SK-N-SH (cell line): ENCODE measurements at regions of chr10 and their contacts with region 1.

Region 1: DNA sequence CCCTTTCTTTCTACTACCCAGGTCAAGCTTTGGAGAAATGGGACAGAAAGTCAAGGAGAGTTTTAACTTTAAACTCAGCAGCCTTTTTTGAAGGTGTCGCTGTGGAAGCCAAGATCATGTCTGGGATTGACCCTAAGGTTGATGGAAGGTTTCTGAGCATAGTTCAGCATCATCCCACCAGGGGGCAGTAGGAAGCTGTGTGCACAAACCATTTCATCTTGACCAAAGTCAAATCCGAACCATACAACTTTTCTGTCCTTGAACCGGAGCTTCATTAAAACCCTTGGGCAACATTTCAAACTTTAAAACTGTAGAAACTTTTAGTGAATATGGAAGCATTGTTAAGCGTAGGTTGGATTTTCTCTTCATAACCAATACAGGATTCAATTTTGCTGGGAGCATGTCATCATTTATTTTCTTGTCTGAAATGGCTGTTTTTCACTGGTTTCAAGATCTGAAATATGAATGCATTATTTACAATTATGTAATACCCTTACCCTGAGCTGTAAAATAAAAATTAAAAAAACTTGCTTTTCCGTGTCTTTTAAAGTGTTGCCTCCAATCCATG is 214.4 kb upstream of the KIAA1217 start:
- DNase-seq: peak; percentile 52
- H3K4me3 ChIP-seq: no peak overlapping the region; a peak in 1 of 4 replicates
- H3K27ac ChIP-seq: peak overlapping the region in 1 of 2 experiments; percentile 62; a peak in 1 of 4 replicates
- H3K4me1 ChIP-seq: peaks cover 0 to 3% of the 10 kb centered on the region in 2 experiments; a peak in 2 of 4 replicates
- H3K27me3 ChIP-seq: no peaks in the 10 kb centered on the region
- CTCF ChIP-seq: peak; percentile 90
- EP300 ChIP-seq: no peak
- RAD21 ChIP-seq: peak; percentile 92

Region 2: GRCh38 chr10:23886355-23886754 is 108.2 kb before region 1 on chr10:
- CTCF ChIA-PET with region 1: no interaction called
- POLR2A ChIA-PET with region 1: no interaction called
- DNase-seq: no peak
- H3K4me3 ChIP-seq: no peak overlapping the region
- H3K27ac ChIP-seq: no peak overlapping the region
- H3K4me1 ChIP-seq: no peaks in the 10 kb centered on the region; a peak in 1 of 4 replicates
- H3K27me3 ChIP-seq: no peaks in the 10 kb centered on the region
- CTCF ChIP-seq: no peak
- EP300 ChIP-seq: no peak
- RAD21 ChIP-seq: no peak

Region 3: DNA sequence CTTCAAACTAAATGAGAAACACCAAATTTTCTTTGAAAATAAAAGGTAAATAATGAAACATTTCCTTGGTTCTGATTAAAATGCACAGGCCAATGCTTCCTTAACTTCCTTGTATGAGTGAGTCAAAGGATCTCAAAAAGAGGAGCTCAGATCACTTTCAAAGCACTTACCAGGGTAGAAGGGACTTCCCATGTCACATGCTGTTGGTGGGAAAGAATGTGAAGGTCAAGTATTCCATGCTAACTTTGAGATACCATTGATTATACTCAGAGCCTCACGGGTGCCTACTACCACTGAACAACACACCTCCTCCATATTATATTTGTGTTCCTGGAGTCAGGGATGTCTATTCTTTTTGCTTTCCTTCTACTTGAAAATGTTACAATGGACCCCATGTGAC is 19.1 kb before region 1 on chr10:
- CTCF ChIA-PET with region 1: interaction called, 31 read pairs
- POLR2A ChIA-PET with region 1: no interaction called
- DNase-seq: no peak
- H3K4me3 ChIP-seq: no peak overlapping the region
- H3K27ac ChIP-seq: no peak overlapping the region
- H3K4me1 ChIP-seq: 0 out of 4 replicates have a peak, but pooled peaks cover 0 to 3% of the 10 kb centered on the region in 2 experiments
- H3K27me3 ChIP-seq: no peaks in the 10 kb centered on the region
- CTCF ChIP-seq: no peak
- EP300 ChIP-seq: no peak
- RAD21 ChIP-seq: no peak

Region 4: GRCh38 chr10:24010436-24010970 is 15.9 kb after region 1 on chr10:
- CTCF ChIA-PET with region 1: interaction called, 18 read pairs
- POLR2A ChIA-PET with region 1: no interaction called
- DNase-seq: no peak
- H3K4me3 ChIP-seq: no peak overlapping the region
- H3K27ac ChIP-seq: no peak overlapping the region
- H3K4me1 ChIP-seq: peaks cover 12 to 18% of the 10 kb centered on the region in 2 experiments; a peak in 3 of 4 replicates
- H3K27me3 ChIP-seq: no peaks in the 10 kb centered on the region
- CTCF ChIP-seq: no peak
- EP300 ChIP-seq: no peak
- RAD21 ChIP-seq: no peak

Region 5: DNA sequence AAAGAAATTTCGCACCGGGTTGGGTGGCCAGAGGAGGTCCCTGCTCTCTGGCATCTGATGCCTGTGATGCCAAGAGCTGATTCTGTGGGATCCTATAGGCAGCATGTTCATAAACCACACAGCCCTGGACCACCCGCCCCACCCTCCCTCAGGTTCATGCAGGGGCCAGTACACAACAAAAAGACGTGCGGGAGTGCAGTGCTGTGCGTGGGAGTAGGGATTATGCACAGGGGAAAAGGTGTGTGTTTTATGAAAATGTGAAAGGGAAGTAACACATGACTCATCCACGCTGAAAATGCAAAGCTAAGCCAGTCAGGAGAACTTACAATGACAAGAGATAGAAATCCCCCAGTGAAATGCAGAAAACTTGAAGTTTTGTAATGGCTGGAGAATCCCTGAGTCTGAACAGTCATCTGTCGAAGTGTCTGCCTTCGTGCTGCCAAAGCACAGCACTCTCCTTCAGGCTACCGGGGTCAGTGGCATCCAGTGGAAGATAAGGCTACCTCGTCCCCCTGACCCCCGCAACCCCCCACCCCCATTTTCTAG is 215.5 kb after region 1 on chr10:
- CTCF ChIA-PET with region 1: interaction called, 10 read pairs
- POLR2A ChIA-PET with region 1: no interaction called
- DNase-seq: peak; percentile 54
- H3K4me3 ChIP-seq: peak overlapping the region; percentile 51 to 59
- H3K27ac ChIP-seq: peak overlapping the region; percentile 64 to 76
- H3K4me1 ChIP-seq: peaks cover 27% of the 10 kb centered on the region in 2 experiments
- H3K27me3 ChIP-seq: no peaks in the 10 kb centered on the region
- CTCF ChIP-seq: no peak
- EP300 ChIP-seq: no peak
- RAD21 ChIP-seq: no peak

Region 6: DNA sequence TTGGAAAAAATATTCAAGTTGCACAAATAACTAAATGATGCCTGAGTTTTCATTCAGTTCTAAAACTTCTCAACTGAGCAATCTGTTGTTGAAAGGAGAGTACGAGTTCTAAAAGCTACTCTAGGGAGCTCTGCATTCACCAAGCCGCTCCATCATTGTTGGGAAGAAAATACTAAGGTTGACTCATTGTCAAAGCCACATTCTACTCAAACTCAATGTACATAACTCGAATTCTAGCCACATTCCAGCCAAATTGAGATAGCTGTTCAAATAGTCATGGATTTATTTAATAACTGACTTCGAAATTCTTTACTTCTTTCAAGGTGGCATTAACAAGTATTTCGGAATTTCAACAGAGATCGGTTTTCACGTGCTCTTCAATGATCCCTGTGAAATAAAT is 277.8 kb after region 1 on chr10:
- CTCF ChIA-PET with region 1: no interaction called
- POLR2A ChIA-PET with region 1: no interaction called
- DNase-seq: no peak
- H3K4me3 ChIP-seq: no peak overlapping the region
- H3K27ac ChIP-seq: no peak overlapping the region
- H3K4me1 ChIP-seq: no peaks in the 10 kb centered on the region
- H3K27me3 ChIP-seq: no peaks in the 10 kb centered on the region
- CTCF ChIP-seq: no peak
- EP300 ChIP-seq: peak in 1 of 2 experiments; percentile 21; a peak in 1 of 4 replicates
- RAD21 ChIP-seq: no peak

Region 7: GRCh38 chr10:24374134-24374915 is 379.8 kb after region 1 on chr10:
- CTCF ChIA-PET with region 1: interaction called, 11 read pairs
- POLR2A ChIA-PET with region 1: no interaction called
- DNase-seq: peak; percentile 29
- H3K4me3 ChIP-seq: no peak overlapping the region
- H3K27ac ChIP-seq: peak overlapping the region in 1 of 2 experiments; percentile 74; a peak in 1 of 4 replicates
- H3K4me1 ChIP-seq: peaks cover 0 to 7% of the 10 kb centered on the region in 2 experiments; a peak in 2 of 4 replicates
- H3K27me3 ChIP-seq: no peaks in the 10 kb centered on the region
- CTCF ChIP-seq: no peak
- EP300 ChIP-seq: no peak
- RAD21 ChIP-seq: no peak

Region 8: DNA sequence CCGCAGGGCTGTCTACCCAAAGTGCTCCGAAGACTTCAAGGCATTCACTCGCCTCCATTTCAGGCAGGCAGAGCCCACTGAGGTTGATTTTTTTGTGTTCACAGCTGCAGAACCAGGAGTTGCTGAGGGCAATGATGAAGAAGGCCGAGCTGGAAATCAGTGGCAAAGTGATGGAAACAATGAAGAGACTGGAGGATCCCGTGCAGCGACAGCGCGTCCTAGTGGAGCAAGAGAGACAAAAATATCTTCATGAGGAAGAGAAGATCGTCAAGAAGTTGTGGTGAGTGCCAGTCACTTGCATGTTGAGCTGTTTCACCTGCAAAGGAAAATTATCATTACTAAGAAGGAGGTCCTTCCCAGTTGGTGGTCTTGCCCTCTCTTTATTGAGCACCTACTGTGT is 518.6 kb after region 1 on chr10:
- CTCF ChIA-PET with region 1: interaction called, 69 read pairs
- POLR2A ChIA-PET with region 1: no interaction called
- DNase-seq: no peak
- H3K4me3 ChIP-seq: no peak overlapping the region; a peak in 1 of 4 replicates
- H3K27ac ChIP-seq: no peak overlapping the region
- H3K4me1 ChIP-seq: no peaks in the 10 kb centered on the region
- H3K27me3 ChIP-seq: no peaks in the 10 kb centered on the region
- CTCF ChIP-seq: peak; percentile 47
- EP300 ChIP-seq: no peak
- RAD21 ChIP-seq: peak; percentile 58